ENCODE measurements at regions of chr1 and their contacts with region 1.

Region 1: DNA sequence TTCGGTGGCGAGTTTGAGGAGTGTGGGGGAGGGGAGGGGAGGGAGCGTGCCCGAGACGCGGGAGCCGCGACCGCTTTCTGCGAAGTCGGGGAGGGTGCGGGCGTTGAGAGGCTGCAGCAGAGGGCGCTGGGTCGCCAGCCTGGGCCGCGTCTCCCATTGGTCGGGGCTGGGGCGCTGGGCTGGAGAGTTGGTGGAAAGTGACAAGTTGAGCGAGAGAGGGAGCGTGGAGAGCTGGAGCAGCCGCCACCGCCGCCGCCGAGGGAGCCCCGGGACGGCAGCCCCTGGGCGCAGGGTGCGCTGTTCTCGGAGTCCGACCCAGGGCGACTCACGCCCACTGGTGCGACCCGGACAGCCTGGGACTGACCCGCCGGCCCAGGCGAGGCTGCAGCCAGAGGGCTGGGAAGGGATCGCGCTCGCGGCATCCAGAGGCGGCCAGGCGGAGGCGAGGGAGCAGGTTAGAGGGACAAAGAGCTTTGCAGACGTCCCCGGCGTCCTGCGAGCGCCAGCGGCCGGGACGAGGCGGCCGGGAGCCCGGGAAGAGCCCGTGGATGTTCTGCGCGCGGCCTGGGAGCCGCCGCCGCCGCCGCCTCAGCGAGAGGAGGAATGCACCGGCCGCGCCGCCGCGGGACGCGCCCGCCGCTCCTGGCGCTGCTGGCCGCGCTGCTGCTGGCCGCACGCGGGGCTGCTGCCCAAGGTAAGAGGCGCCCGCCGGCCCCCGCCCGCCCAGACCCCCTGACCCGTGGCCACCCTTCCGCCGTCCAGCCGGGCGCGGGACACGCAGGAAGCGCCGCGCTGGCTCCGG is at the start of gene ROR1:
- DNase-seq: peak; percentile 80
- H3K27ac ChIP-seq: peak within 1 kb of the TSS; percentile 75
- CTCF ChIP-seq: peak; percentile 79

Region 2: GRCh38 chr1:64051796-64052195 is 277.8 kb after region 1 on chr1:
- CTCF ChIA-PET with region 1: no interaction called
- POLR2A ChIA-PET with region 1: no interaction called
- DNase-seq: no peak
- H3K27ac ChIP-seq: no peak overlapping the region
- CTCF ChIP-seq: no peak

Region 3: DNA sequence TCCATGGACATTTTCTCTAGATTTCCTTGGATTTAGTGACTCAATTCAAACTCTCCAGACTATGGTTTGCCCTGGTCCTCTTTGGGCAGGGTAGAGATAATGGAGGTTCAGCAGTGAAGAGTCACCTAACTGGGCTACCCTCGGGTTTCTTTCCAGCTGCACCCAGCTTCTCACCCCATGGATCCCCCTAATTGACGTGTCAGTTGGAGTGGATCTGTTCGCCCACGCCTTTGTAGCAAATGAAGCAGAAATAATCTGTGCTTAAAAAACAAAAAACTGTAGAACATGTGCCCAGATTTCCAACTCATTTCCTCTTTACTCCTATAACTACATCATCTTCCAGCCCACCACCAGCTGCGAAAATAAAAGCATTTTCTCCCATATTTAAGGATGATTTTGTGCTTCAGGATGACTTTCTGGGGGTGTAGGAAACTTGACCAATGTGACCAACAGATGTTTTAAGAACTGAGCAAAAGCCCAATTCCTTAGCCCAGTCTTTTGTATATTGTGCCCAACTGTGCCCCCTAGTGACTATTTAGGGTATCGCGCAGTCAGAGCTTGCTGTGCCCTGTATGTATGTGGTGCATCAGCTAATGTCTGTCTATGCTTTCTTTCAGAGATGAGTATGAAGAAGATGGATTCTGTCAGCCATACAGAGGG is 362.9 kb after region 1 on chr1:
- CTCF ChIA-PET with region 1: interaction called, 12 read pairs
- POLR2A ChIA-PET with region 1: no interaction called
- DNase-seq: peak; percentile 62
- H3K27ac ChIP-seq: peak overlapping the region; percentile 33; the same call in 1 of the 2 replicates
- CTCF ChIP-seq: peak; percentile 91